ENCODE measurements at regions of chr17 and their contacts with region 1.

Region 1: DNA sequence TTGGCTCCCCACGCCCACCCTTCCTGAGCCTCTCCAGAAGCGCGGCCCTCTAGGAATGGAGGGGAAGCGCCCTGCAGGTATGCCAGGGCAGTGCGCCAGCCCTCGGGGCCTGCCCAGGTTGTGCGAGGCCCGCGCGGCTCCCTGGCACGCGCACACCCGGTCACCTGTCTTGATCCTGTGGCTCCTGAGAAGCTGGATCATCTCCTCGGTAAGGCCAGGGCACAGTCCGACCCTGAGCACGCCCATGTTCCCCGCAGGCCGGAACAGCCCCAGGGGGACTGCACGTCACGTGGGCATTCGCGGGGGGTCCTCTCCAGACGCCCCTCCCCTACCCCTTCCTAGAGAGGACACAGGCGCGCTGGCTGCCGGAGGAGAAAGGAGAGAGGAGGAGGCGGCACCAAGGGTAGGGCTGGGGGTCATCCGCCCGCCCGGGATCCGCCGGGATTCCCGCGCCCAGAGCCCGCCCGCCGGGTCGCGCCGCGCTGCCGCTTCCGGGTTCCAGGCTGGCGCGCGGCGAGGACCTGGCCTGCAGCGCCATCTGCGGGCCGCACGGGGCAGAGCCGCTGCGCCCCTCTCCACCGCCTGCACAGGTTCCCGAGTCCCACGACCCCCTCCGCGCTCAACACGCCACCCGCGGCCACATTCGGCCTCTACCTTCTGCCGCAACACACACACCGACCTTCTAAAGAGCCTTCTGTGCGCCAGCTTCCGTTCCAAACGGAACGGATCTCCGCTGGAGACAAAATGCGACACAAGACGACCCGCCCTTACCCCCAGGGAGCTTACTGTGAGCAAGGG is at the start of gene RAD51D:
- DNase-seq: peak; percentile 32 to 87 (median 74)

Region 2: GRCh38 chr17:34416116-34416515 is 703.5 kb before region 1 on chr17:
- intact Hi-C with region 1: loop called (anchors 5 kb)
- DNase-seq: no peak

Region 3: DNA sequence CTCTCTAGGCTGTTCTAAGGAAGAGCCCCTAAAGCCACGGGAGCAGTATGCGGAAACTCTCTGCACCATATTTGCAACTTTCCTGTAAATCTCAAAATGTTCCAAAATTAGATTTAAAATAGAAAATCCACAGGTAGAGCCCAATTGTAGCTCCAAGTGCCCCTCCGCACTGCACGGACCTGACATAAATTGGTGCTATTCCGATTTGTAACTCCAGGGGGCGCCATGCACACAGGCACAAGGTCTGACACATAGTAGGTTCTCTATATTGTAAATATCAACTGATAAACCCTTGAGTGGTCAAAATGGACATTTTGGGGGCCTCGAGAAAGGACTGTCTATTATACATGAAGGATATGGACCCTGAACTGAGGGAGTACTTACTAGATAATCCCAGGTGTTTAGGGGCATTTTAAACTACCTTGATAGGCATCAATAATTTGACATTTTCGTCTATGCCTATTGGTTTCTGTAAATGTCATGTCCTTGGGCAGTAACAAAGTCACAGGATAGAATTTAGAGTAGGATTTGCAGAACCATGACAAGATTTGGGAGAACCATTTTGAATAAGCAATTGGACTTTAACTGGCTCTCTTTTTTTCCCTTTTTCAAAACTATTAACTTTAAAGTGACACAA is 576.7 kb before region 1 on chr17:
- intact Hi-C with region 1: loop called (anchors 5 kb)
- DNase-seq: peak in 37 of 42 donors; percentile 13 to 84 (median 55)

Region 4: DNA sequence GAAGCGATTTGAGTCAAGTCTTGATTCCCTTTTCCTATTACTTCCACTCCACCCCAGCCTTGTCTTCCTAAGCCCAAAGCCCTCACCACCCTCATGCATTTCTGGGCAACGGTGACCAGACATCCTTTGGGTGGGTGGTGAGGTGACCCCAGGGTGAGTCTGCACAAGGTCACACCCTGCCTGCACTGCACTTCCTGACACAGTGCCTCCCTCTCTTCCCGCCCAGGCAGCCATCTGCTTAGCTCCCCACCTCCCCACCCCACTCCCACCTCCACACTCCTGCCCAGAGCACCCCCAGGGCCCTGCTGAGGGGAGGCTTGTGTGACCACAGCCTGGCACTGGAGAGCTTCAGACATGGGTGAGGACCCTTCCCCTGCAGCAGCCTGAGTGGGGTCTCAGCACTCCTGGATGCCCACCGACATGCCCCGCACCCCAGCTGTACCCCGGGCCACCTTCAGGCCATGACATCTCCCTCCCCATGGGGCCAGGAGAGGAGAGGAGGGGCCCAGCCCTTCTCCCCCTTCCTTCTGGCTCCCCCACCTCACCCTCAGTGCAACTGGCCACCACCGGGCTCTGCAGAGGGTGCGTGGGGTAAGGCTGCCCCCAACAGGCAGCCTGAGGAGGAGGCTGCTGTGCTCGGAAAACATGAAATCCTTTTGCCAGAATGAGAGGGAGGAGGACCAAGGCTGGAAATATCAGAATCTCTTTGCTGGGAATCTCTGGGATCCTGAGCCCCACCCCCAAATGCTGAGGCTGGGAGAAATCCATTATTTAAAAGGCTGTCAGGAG is 226.9 kb before region 1 on chr17:
- intact Hi-C with region 1: no loop called
- DNase-seq: peak in 26 of 42 donors; percentile 3 to 50 (median 28)

Region 5: DNA sequence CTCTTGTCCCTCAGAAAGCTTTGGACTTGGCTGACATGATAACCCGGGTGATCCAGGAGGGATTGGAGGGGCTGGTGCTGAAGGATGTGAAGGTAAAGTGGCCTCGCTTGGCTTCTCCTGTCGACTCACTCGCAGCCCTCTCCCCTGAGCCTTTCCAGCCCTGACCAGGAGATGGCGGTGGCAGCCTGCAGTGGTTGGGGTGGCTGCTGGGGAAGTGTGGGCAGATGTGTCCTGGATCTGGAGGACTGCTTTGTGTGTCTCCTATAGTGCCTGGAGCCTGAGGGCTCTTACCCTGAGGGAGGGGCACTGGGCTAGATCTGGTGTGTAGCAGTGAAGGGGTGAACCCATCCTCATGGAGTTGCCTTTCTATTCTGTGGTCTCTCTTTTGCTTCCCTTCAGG is 121.4 kb before region 1 on chr17:
- intact Hi-C with region 1: loop called (anchors 5 kb)
- DNase-seq: peak; percentile 48 to 92 (median 82)

Measured in head of caudate nucleus (tissue), 42 donors.